T-cell (primary cell): ENCODE measurements at regions of chr11 and their contacts with region 1.

Region 1: DNA sequence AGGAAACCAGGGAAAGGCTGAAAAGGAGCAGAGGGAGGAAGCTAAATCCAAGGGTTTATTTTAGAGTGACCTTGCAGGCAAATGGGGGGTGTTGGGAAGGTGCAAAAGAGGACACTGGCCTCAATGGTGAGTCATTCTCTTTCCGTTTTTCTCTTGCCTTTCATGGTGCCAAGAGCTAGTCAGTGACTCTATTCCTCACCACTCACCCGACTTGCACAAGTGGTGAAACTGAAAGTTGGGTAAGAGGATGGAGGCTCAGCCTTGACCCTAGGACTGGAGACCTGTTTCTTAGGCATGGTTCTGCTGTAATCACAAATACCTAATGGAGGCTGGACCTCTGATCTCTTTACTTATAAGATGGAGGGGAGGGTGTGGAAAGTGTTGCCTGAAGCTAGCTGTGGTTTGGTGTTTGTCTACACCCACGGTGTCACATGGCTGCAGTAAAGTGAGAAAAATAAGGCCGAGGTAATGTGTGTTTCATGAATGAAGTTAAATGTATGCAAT is 67.3 kb upstream of the CREB3L1 start:
- DNase-seq: peak in 2 of 35 experiments; percentile 7 to 10
- ATAC-seq: no peak
- H3K4me3 ChIP-seq: no peak overlapping the region
- H3K4me3 Mint-ChIP-seq: no peak overlapping the region
- H3K27ac ChIP-seq: no peak overlapping the region
- H3K27ac Mint-ChIP-seq: no peak overlapping the region
- H3K4me1 ChIP-seq: peaks cover 0 to 5% of the 10 kb centered on the region in 2 experiments
- H3K4me1 Mint-ChIP-seq: peaks cover 0 to 13% (median 12%) of the 10 kb centered on the region in 3 donors
- H3K27me3 ChIP-seq: peaks cover 2% of the 10 kb centered on the region in 2 experiments
- H3K27me3 Mint-ChIP-seq: peaks cover 10 to 12% of the 10 kb centered on the region in 2 donors

Region 2: GRCh38 chr11:46064221-46064620 is 146.0 kb before region 1 on chr11:
- CTCF ChIA-PET with region 1: no interaction called
- POLR2A ChIA-PET with region 1: no interaction called
- DNase-seq: no peak
- ATAC-seq: no peak
- H3K4me3 ChIP-seq: no peak overlapping the region
- H3K4me3 Mint-ChIP-seq: no peak overlapping the region
- H3K27ac ChIP-seq: no peak overlapping the region
- H3K27ac Mint-ChIP-seq: no peak overlapping the region
- H3K4me1 ChIP-seq: no peaks in the 10 kb centered on the region
- H3K4me1 Mint-ChIP-seq: peaks cover 13 to 35% (median 13%) of the 10 kb centered on the region in 3 donors
- H3K27me3 ChIP-seq: no peaks in the 10 kb centered on the region
- H3K27me3 Mint-ChIP-seq: no peaks in the 10 kb centered on the region

Region 3: GRCh38 chr11:46222490-46223251 is 12.5 kb after region 1 on chr11:
- CTCF ChIA-PET with region 1: no interaction called
- POLR2A ChIA-PET with region 1: no interaction called
- DNase-seq: no peak
- ATAC-seq: no peak
- H3K4me3 ChIP-seq: no peak overlapping the region
- H3K4me3 Mint-ChIP-seq: no peak overlapping the region
- H3K27ac ChIP-seq: no peak overlapping the region
- H3K27ac Mint-ChIP-seq: no peak overlapping the region
- H3K4me1 ChIP-seq: no peaks in the 10 kb centered on the region
- H3K4me1 Mint-ChIP-seq: no peaks in the 10 kb centered on the region
- H3K27me3 ChIP-seq: peaks cover 2 to 12% of the 10 kb centered on the region in 2 experiments
- H3K27me3 Mint-ChIP-seq: peaks cover 28 to 35% of the 10 kb centered on the region in 2 donors

Region 4: GRCh38 chr11:46554205-46555055 is 344.2 kb after region 1 on chr11:
- CTCF ChIA-PET with region 1: interaction called in 1 of 2 experiments, 10 read pairs
- POLR2A ChIA-PET with region 1: no interaction called
- DNase-seq: no peak
- ATAC-seq: no peak
- H3K4me3 ChIP-seq: no peak overlapping the region
- H3K4me3 Mint-ChIP-seq: peak overlapping the region in 1 of 3 donors; percentile 10
- H3K27ac ChIP-seq: no peak overlapping the region
- H3K27ac Mint-ChIP-seq: peak overlapping the region; percentile 71 to 88
- H3K4me1 ChIP-seq: peaks cover 20 to 23% of the 10 kb centered on the region in 2 experiments
- H3K4me1 Mint-ChIP-seq: peaks cover 65 to 68% (median 67%) of the 10 kb centered on the region in 3 donors
- H3K27me3 ChIP-seq: no peaks in the 10 kb centered on the region
- H3K27me3 Mint-ChIP-seq: no peaks in the 10 kb centered on the region